ENCODE measurements at regions of chr22 and their contacts with region 1.

Region 1: GRCh38 chr22:48753752-48754517 is 1073.7 kb downstream of the BRD1 start:
- DNase-seq: no peak
- H3K4me3 ChIP-seq: no peak overlapping the region
- H3K27ac ChIP-seq: no peak overlapping the region
- H3K4me1 ChIP-seq: no peaks in the 10 kb centered on the region
- H3K27me3 ChIP-seq: no peaks in the 10 kb centered on the region
- CTCF ChIP-seq: no peak
- EP300 ChIP-seq: no peak
- POLR2A ChIP-seq: no peak

Region 2: DNA sequence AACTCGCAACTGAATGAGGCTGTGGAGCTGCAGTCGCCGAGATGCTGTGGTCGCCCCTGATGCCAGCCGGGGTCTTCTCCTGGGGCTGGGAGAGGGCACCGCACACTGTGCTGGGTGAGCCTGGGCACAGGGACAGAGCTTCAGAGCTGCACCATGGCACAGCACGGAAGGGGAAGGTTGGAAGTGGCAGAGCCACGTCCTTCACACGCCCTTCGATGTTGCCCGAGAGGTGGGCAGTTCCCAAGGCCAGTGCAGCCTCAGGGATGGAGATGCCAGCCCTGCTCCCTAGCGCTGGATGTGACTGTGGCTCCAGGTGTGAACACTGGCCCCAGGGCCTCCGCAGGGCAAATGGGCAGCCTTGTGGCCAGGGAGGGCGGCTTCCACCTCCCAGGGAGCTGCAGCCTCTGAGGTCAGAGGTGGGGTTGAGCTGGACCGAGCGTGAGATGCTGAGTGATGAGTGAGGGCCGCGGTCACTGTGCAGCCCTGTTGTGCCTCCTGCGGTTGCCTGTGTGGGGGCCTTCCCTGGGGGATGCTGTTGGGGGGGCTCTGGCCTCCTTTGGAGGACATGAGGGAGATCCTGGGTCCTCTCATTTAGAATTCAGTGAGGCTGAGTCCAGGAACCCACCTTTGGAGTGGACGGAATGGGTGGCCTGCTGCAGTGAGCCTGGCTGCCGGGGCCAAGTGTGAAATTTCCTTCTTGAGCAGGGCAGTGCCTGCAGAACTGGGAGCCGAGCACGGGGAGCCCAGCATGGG is 16.3 kb before region 1 on chr22:
- intact Hi-C with region 1: loop called in 1 of 4 experiments (anchors 1 kb)
- DNase-seq: no peak
- H3K4me3 ChIP-seq: no peak overlapping the region
- H3K27ac ChIP-seq: no peak overlapping the region
- H3K4me1 ChIP-seq: no peaks in the 10 kb centered on the region
- H3K27me3 ChIP-seq: no peaks in the 10 kb centered on the region
- CTCF ChIP-seq: no peak
- EP300 ChIP-seq: no peak
- POLR2A ChIP-seq: no peak